Activated CD4-positive, alpha-beta memory T cell treated with anti-CD3 and anti-CD28 coated beads for 36 hours (primary cell): ENCODE measurements at regions of chr13 and their contacts with region 1.

Region 1: DNA sequence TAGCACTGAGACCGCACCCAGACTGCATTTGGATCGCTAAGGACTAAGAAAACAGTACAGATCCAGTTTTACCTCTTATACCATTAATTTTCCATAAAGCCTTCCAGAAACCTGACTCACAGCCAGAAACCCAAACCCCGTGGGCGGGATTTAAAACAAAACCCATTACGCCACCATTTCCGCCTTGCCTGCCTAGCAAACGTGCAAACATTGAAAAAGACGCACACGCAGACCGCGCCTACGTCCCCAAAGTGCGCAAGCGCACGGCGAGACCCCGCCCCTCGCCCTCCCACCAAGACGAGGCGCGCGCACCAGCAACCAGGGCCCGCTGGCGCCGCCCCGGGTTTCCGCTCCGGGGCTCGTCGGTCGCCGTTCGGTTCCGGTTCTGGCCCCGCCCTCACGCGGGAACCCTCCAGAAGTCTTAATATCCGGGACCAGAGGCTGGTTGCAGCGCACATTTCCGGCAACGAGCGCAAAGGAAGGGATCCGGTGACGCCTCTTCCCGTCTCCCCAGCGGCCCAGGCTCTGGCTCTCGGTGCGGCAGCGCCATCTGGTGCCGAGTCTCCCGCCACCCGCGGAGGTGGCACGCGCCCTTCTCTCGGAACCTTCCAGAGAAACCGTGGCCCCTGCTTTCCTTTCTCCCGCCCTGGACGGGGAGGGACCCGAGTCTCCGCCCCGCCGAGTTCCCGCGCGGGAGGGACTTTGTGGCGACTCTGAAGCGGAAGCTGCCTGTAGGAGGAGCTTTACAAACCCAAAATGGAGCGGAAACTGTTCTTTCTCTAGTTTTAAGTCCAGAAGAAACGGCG is 256.9 kb upstream of the STARD13 start:
- DNase-seq: peak; percentile 99
- H3K4me3 Mint-ChIP-seq: peak overlapping the region; percentile 83
- H3K27ac Mint-ChIP-seq: peak overlapping the region; percentile 100
- H3K4me1 Mint-ChIP-seq: peaks cover 51% of the 10 kb centered on the region
- H3K27me3 Mint-ChIP-seq: no peaks in the 10 kb centered on the region

Region 2: DNA sequence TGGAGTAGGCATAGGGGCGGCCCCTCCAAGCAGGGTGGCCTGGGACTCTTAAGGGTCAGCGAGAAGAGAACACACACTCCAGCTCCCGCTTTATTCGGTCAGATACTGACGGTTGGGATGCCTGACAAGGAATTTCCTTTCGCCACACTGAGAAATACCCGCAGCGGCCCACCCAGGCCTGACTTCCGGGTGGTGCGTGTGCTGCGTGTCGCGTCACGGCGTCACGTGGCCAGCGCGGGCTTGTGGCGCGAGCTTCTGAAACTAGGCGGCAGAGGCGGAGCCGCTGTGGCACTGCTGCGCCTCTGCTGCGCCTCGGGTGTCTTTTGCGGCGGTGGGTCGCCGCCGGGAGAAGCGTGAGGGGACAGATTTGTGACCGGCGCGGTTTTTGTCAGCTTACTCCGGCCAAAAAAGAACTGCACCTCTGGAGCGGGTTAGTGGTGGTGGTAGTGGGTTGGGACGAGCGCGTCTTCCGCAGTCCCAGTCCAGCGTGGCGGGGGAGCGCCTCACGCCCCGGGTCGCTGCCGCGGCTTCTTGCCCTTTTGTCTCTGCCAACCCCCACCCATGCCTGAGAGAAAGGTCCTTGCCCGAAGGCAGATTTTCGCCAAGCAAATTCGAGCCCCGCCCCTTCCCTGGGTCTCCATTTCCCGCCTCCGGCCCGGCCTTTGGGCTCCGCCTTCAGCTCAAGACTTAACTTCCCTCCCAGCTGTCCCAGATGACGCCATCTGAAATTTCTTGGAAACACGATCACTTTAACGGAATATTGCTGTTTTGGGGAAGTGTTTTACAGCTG is 1227.1 kb before region 1 on chr13 and contains the starts of genes BRCA2 and ZAR1L:
- CTCF ChIA-PET with region 1: no interaction called
- POLR2A ChIA-PET with region 1: no interaction called
- intact Hi-C with region 1: loop called (anchors 1 kb)
- DNase-seq: peak; percentile 93
- H3K4me3 Mint-ChIP-seq: peak within 1 kb of the TSS; percentile 95
- H3K27ac Mint-ChIP-seq: peak within 1 kb of the TSS; percentile 99
- H3K4me1 Mint-ChIP-seq: peaks cover 13% of the 10 kb centered on the region
- H3K27me3 Mint-ChIP-seq: no peaks in the 10 kb centered on the region
- total RNA-seq, gene BRCA2: 22.1 to 23.1 TPM
- total RNA-seq, gene ZAR1L: not detected

Region 3: GRCh38 chr13:32538621-32539246 is 1003.8 kb before region 1 on chr13 and contains the start of gene N4BP2L2:
- CTCF ChIA-PET with region 1: no interaction called
- POLR2A ChIA-PET with region 1: no interaction called
- intact Hi-C with region 1: loop called (anchors 1 kb)
- DNase-seq: peak; percentile 95
- H3K4me3 Mint-ChIP-seq: peak within 1 kb of the TSS; percentile 99
- H3K27ac Mint-ChIP-seq: peak within 1 kb of the TSS; percentile 100
- H3K4me1 Mint-ChIP-seq: peaks cover 41% of the 10 kb centered on the region
- H3K27me3 Mint-ChIP-seq: peaks cover 2% of the 10 kb centered on the region
- total RNA-seq, gene N4BP2L2: 86.6 to 102 TPM

Region 4: GRCh38 chr13:32791545-32792172 is 750.8 kb before region 1 on chr13:
- CTCF ChIA-PET with region 1: no interaction called
- POLR2A ChIA-PET with region 1: no interaction called
- intact Hi-C with region 1: loop called (anchors 10 kb)
- DNase-seq: peak; percentile 59
- H3K4me3 Mint-ChIP-seq: no peak overlapping the region
- H3K27ac Mint-ChIP-seq: no peak overlapping the region
- H3K4me1 Mint-ChIP-seq: peaks cover 23% of the 10 kb centered on the region
- H3K27me3 Mint-ChIP-seq: no peaks in the 10 kb centered on the region

Region 5: DNA sequence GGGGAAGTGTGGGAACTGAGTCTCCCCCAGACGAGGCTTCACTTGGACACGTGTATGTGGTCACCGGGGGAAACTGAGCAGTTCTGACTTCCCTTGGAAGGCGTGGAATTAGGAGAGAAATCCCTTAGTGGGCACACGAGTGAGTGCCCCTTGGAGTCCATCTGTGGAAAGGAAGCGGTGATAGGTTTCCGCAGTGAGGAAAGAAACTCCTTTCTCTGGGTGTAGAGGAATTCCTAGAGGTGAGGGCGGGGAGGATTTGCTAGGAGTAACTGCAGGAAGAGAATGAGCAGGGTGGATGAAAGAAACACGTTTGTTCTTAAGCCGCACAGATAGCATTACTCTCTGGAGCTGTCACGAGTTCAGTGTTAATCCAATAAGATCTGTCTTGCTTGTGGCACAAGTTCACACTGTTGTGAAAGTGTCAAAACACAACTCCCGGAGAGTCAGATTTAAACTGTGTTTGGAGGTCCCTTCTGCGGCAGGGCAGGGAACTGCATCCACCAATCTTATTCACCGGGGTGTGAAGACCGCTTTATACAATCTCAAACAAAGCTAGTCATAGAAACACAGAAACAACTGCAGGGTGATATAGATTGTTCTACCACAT is 525.1 kb before region 1 on chr13:
- CTCF ChIA-PET with region 1: interaction called, 3 read pairs
- POLR2A ChIA-PET with region 1: no interaction called
- intact Hi-C with region 1: loop called (anchors 2 kb)
- DNase-seq: peak; percentile 76
- H3K4me3 Mint-ChIP-seq: peak overlapping the region; percentile 65
- H3K27ac Mint-ChIP-seq: no peak overlapping the region
- H3K4me1 Mint-ChIP-seq: peaks cover 11% of the 10 kb centered on the region
- H3K27me3 Mint-ChIP-seq: peaks cover 57% of the 10 kb centered on the region

Region 6: GRCh38 chr13:33610471-33611015 is 68.1 kb after region 1 on chr13:
- CTCF ChIA-PET with region 1: interaction called, 13 read pairs
- POLR2A ChIA-PET with region 1: interaction called, 8 read pairs
- intact Hi-C with region 1: loop called (anchors 1 kb)
- DNase-seq: peak; percentile 87
- H3K4me3 Mint-ChIP-seq: peak overlapping the region; percentile 79
- H3K27ac Mint-ChIP-seq: peak overlapping the region; percentile 94
- H3K4me1 Mint-ChIP-seq: peaks cover 50% of the 10 kb centered on the region
- H3K27me3 Mint-ChIP-seq: no peaks in the 10 kb centered on the region

Region 7: GRCh38 chr13:33723772-33724435 is 181.4 kb after region 1 on chr13:
- CTCF ChIA-PET with region 1: interaction called, 61 read pairs
- POLR2A ChIA-PET with region 1: interaction called, 9 read pairs
- intact Hi-C with region 1: loop called (anchors 1 kb)
- DNase-seq: peak; percentile 78
- H3K4me3 Mint-ChIP-seq: no peak overlapping the region
- H3K27ac Mint-ChIP-seq: peak overlapping the region; percentile 57
- H3K4me1 Mint-ChIP-seq: peaks cover 37% of the 10 kb centered on the region
- H3K27me3 Mint-ChIP-seq: no peaks in the 10 kb centered on the region